PC-3 (cell line): ENCODE measurements at regions of chr9 and their contacts with region 1.

Region 1: DNA sequence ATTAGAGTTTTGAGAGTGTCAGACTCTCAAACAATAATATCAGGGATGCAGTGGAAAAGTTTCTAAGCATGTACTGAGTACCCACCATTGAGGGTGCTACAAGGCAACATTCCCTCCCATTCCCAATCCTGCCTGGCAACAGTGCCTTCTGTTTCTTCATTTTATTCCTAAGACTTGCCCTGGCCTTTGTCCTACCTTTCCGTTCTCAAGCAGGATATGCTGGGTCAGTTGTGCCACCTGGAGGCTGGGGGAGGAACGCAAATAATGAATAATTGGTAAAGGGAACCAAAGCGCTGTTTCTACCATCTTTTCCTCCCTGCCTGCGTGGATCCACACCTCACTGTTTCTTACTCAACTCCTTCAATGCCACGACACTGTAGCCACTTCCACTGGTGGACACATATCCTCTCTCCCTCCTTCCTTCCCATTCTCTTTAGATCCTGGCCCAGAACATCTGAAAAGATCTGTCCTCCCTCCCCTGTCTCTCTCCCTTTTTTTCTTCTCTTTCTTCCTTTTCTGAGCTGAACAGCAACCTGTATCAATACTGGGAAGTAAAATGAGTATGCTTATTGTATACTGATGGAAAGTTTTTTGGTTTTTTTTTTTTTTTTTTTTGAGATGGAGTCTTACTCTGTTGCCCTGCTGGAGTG is 149.5 kb downstream of the C9orf152 start:
- DNase-seq: peak; percentile 79
- ATAC-seq: peak; percentile 85
- H3K4me3 ChIP-seq: no peak overlapping the region
- H3K27ac ChIP-seq: no peak overlapping the region
- H3K4me1 ChIP-seq: peaks cover 11% of the 10 kb centered on the region
- H3K27me3 ChIP-seq: no peaks in the 10 kb centered on the region
- CTCF ChIP-seq: peak; percentile 78

Region 2: DNA sequence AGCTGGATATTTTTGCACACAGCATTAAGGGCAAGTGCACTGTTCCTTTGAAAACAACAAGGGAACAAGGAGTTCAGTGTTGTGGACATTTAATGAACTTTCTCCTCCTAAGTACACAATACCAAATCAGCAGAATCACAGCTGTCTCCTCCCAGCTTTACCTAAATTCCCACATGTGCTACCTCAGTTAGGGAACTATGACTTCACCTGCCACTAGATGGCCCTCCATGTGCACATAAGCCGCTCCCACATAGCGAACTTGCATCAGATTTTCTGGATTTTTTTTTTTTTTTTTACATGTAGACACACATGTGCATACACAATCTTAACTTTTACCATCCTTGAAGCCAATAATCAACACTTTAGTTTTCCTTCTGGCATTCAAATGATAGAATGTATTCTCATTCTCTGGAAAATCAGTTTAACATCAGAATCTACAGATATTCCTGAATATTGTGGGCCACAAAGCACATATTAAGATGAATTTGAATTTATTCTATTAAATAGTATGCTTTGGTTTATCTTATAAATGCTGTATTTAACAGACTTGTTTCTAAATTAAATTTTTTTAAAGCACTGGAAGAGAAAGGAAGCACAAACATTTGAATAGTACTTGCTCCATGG is 154.8 kb before region 1 on chr9:
- CTCF ChIA-PET with region 1: interaction called, 3 read pairs
- POLR2A ChIA-PET with region 1: no interaction called
- intact Hi-C with region 1: loop called (anchors 1 kb)
- DNase-seq: peak; percentile 78
- ATAC-seq: peak; percentile 81
- H3K4me3 ChIP-seq: no peak overlapping the region
- H3K27ac ChIP-seq: no peak overlapping the region
- H3K4me1 ChIP-seq: no peaks in the 10 kb centered on the region
- H3K27me3 ChIP-seq: no peaks in the 10 kb centered on the region
- CTCF ChIP-seq: peak; percentile 89

Region 3: GRCh38 chr9:109969011-109969410 is 89.4 kb before region 1 on chr9:
- CTCF ChIA-PET with region 1: interaction called, 8 read pairs
- POLR2A ChIA-PET with region 1: interaction called, 3 read pairs
- intact Hi-C with region 1: loop called (anchors 1 kb)
- DNase-seq: peak; percentile 26
- ATAC-seq: peak; percentile 91
- H3K4me3 ChIP-seq: no peak overlapping the region
- H3K27ac ChIP-seq: no peak overlapping the region
- H3K4me1 ChIP-seq: no peaks in the 10 kb centered on the region
- H3K27me3 ChIP-seq: no peaks in the 10 kb centered on the region
- CTCF ChIP-seq: peak; percentile 40; the same call in 1 of the 2 replicates

Region 4: DNA sequence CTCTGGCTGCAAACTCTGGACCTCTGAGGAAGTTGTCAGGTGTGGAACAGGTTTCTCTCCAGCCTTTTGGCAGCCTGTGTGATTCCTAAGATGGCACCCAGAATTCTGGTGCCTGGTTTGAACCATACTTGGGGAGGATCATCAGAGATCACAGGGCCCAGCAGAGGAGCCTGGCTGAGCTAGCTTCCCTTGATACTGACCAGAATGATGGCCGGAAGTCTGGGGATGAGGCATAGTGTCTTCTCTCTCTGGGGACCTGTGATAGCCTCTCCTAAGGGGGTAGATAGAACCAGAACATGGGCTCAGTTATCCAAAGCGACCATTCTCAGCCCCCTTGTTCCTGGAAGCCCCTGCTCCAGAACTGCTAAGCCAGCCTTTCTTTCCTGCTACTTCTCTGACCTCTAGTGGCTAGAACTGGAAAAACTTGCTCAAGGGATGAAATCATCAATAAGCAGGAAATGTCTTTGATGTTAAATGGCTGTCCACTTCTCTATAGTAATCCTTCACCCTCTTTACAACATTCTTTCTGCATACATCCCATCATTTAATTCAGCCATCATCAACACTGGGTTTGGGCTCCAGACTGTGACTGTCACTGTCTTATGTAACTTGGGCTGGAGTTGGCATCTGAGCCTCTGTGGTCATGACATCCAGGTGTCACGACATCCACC is 94.4 kb after region 1 on chr9:
- CTCF ChIA-PET with region 1: no interaction called
- POLR2A ChIA-PET with region 1: no interaction called
- intact Hi-C with region 1: loop called (anchors 2 kb)
- DNase-seq: peak; percentile 65
- ATAC-seq: peak; percentile 46; the same call in 1 of the 2 replicates
- H3K4me3 ChIP-seq: no peak overlapping the region
- H3K27ac ChIP-seq: no peak overlapping the region
- H3K4me1 ChIP-seq: 0 out of 2 replicates have a peak, but pooled peaks cover 3% of the 10 kb centered on the region
- H3K27me3 ChIP-seq: no peaks in the 10 kb centered on the region
- CTCF ChIP-seq: peak; percentile 84

Region 5: DNA sequence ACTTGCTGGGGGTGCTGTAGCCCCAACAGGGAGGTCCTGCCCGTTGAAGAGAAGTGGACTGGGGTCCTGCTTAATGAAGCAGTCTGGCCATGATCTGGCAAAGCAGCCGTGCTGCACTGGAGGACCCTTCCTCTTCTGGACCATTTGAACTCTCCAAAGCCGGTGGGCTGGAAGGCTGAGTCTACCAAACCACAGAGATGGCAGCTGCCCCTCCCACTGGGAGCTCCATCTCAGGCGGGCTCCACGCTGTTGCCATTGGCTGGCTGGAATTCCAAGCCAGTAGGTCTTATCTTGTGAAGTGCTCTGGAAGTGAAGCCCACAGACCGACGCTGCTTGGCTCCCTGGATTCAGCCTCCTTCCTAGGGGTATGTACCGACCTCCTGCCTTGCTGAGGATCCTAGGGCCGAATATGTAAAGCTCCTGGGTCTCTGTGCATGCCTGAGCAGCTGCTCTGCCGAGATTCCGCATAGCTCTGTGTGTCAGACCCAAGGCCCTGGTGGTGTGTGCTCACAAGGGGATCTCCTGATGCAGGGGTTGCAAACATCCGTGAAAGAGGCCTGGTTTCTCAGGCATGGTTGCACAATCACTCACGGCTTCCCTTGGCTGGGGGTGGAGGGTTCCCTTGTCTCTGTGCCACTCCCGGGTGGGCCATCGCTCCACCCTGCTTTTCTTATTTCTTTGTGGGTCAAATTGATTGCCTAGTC is 540.9 kb after region 1 on chr9:
- CTCF ChIA-PET with region 1: no interaction called
- POLR2A ChIA-PET with region 1: interaction called, 11 read pairs
- intact Hi-C with region 1: no loop called
- DNase-seq: no peak
- ATAC-seq: no peak
- H3K4me3 ChIP-seq: no peak overlapping the region
- H3K27ac ChIP-seq: no peak overlapping the region
- H3K4me1 ChIP-seq: no peaks in the 10 kb centered on the region; the same call in 1 of the 2 replicates
- H3K27me3 ChIP-seq: no peaks in the 10 kb centered on the region
- CTCF ChIP-seq: no peak